Right ventricle myocardium inferior (tissue), 1 donor: ENCODE measurements at regions of chr10 and their contacts with region 1.

Region 1: GRCh38 chr10:61140765-61141392 is 196.9 kb upstream of the RHOBTB1 start:
- DNase-seq: no peak
- ATAC-seq: peak; percentile 57

Region 2: GRCh38 chr10:60816628-60817397 is 324.1 kb before region 1 on chr10:
- intact Hi-C with region 1: loop called (anchors 5 kb)
- DNase-seq: no peak
- ATAC-seq: peak; percentile 94

Region 3: GRCh38 chr10:61024856-61025600 is 115.9 kb before region 1 on chr10:
- intact Hi-C with region 1: no loop called
- DNase-seq: no peak
- ATAC-seq: no peak

Region 4: DNA sequence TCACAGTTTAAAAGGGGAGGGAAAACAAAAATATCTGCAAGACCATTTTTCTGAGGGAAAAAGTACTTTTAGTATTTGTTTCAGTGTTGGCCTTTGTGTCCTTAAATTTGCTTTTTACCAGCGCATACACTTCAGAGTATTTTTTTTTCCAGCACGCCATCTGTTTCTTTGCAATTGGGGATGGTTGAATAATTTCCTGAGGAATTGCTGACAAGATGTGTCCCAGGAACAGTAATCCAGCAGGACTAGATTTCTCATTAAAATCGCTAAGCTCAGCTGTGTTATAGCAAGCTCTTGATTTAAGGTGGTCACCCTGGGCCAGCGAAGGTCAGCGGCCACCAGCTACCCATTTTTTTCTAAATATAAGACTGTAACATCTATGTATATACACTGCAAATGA is 40.0 kb before region 1 on chr10:
- intact Hi-C with region 1: no loop called
- DNase-seq: no peak
- ATAC-seq: no peak

Region 5: DNA sequence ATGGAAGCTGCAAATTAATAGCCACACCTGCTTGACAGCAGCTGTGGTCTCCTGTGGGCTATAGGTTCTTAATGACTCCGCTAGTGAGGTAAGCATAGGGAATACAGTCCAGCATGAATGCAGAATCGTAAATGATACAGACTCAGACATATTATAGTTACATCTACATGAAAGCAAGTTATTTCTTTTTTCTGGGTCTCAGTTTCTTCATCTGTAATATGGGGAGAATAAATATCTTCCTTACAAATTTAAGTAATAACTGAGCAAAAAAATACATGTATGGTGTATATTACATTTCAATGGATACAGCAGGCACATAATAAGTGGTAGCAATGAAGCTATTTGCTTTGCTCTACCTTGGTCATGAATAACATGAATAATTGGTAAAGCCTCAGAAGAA is 49.0 kb after region 1 on chr10:
- intact Hi-C with region 1: loop called (anchors 5 kb)
- DNase-seq: no peak
- ATAC-seq: no peak

Region 6: GRCh38 chr10:61284222-61284890 is 143.5 kb after region 1 on chr10:
- intact Hi-C with region 1: loop called (anchors 1 kb)
- DNase-seq: no peak
- ATAC-seq: no peak

Region 7: DNA sequence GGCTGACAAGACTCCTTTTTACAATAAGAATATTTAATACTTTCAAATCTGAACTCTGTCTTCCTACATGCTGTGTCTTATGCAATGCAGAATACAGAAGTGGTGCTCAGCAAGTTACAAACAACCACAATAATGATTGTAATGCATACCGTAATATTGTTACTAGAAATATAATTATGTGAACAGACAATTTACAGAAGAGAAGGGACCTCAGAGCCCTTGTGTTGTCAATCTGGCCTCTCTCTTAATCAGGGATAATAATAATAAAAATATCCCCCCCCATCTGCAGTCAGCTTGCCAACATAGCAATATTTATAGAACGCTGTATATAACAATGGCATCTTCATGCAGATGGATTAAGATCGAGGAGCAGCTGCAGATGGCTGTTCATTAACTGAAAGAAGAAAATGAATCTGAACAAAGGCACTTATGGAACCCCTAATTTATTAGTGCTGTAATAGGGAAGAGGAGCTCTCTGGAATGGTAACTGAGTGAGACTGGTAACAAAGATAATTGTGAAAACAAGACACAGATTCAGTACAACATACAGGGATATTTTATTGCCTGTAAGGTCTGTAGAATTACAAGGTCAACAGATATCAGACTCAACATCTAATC is 206.0 kb after region 1 on chr10:
- intact Hi-C with region 1: no loop called
- DNase-seq: no peak
- ATAC-seq: no peak

Region 8: GRCh38 chr10:61733358-61733940 is 592.6 kb after region 1 on chr10:
- intact Hi-C with region 1: loop called (anchors 10 kb)
- DNase-seq: no peak
- ATAC-seq: no peak